ENCODE measurements at regions of chr3 and their contacts with region 1.

Region 1: DNA sequence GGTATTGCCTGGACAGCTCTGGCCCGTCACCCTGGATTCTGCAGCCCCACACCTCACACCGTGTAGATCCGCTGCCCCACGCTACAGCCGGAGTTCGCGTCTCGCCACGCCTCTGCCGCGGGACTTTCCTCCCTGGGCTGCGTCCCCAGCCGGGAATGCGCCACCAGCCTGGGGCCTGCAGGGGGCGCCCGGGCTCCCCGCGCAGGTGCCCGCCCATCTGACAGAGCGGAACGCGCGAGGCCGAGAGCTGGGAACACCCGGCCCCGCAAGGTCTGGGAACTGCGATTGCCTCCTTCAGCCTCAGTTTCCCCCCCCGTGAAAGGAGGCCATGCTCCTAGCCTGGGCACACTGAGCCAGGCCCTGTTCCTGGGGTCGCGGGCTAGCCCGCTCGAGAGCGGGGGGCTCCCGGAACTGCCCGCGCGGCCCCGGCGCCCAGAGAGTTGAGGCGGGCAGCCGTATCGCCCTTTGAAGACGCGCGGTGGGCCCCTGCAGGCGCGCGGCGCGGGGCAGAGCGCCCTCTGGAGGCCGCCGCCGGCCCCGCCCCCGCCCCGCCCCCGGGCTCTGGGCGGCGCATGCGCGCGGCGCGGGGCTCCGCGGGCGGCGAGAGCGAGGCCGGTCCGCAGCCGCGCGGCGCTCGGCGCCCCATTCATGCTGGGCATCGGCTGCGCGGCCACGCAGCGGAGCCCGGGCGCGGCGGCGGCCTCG is at the start of gene PLXNA1:
- DNase-seq: peak in 9 of 10 donors; percentile 35 to 96 (median 67)

Region 2: GRCh38 chr3:126703512-126704462 is 278.8 kb before region 1 on chr3 and contains the start of gene CHCHD6:
- intact Hi-C with region 1: loop called (anchors 5 kb)
- DNase-seq: peak; percentile 92 to 99 (median 94)

Region 3: GRCh38 chr3:126921085-126921824 is 61.4 kb before region 1 on chr3:
- intact Hi-C with region 1: no loop called
- DNase-seq: no peak

Region 4: DNA sequence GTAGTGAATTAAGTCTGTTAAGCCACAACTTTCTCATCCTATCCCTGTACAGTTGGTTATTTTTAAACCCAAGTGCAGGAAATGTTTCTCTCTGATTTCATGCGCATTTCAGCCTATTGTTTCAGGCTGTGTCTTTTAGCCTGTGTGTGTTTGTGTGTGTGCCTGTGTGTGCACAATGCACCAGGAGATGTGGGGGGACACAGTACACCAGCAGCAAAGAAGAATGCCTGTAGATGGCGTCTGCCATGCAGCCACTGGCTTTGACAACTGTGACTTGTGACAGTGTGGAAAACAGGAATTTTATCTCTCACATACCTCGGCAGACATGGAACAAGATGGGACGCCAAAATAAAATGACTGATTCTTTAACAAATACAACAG is 43.3 kb before region 1 on chr3:
- intact Hi-C with region 1: no loop called
- DNase-seq: peak in 4 of 10 donors; percentile 41 to 92 (median 71)

Region 5: DNA sequence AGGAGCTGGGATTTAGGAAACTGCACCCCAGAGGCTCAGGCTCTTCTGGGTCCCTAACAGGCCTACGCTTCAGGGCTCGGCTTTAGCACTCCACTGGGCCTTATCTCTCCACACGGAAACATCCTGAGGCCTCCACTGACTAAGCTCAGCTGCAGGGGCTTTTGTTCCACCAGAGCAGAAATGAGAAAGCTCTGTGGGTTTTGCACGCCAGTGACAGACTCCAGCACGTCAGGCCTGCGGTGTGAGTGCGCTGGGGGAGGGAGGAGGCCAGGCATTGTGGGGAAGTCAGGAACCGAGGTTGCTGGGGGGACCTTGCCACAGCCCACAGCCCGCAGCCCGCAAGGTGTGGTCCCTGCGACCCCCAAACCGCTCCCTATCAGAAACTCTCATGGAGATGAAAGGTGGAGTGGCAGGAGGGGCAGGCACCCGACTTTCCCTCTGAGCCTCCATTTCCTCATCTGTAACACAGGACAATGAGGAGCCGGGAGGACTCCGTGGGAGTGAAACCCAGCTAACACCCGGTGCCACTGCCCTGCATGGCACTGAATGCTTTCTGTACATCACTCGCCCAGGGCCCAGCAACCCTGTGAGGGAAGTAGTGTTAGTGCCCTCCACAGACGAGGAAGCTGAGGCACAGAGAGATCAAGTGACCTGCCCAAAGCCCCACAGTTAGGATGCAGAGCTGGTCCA is 501.4 kb after region 1 on chr3:
- intact Hi-C with region 1: no loop called
- DNase-seq: peak in 2 of 10 donors; percentile 5 to 69